Calu3 (cell line): ENCODE measurements at regions of chr14 and their contacts with region 1.

Region 1: GRCh38 chr14:23588884-23589598 is 10.5 kb upstream of the JPH4 start:
- DNase-seq: peak; percentile 91
- H3K4me3 Mint-ChIP-seq: no peak overlapping the region
- H3K27ac Mint-ChIP-seq: no peak overlapping the region
- H3K4me1 Mint-ChIP-seq: peaks cover 7% of the 10 kb centered on the region
- H3K27me3 Mint-ChIP-seq: peaks cover 14% of the 10 kb centered on the region
- CTCF ChIP-seq: peak; percentile 69

Region 2: DNA sequence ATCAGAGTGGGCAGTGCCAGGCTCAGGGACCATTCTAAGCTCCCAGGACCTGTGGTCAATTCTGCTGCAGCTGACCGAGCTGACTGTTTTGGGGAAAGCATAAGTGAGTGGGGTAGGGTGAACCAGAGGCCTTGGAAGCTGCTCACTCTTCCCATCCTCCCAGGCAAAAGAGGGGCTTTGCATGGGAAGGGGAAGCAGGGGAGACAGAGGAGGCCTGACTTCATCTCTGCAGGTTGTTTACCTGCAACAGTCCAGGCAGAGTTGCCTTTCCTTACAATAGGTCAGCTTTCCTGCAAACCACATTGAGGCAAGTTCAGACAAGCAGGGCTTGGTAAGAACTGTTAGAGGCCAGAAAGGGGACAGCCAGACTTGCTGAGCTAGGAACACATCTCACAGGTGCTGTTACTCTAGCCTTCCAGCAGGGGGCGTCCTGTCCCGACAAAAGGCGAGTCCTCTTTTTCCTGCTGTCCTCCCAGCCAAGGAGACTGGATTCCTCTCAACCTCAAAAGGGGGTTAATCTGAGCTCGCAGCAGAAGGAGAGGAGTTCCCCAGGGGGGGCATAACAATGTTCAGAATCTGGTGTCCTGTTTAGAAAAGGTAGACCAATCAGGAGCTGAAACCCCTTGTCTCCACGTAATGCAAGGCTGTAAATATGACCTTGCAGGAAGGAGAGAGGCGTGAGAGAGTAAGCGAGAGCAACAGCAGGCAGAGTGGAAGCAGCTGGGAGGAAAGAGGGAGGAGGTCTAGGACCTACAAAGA is 42.8 kb after region 1 on chr14:
- CTCF ChIA-PET with region 1: interaction called, 23 read pairs
- intact Hi-C with region 1: no loop called
- DNase-seq: peak; percentile 84
- H3K4me3 Mint-ChIP-seq: no peak overlapping the region
- H3K27ac Mint-ChIP-seq: no peak overlapping the region
- H3K4me1 Mint-ChIP-seq: peaks cover 7% of the 10 kb centered on the region
- H3K27me3 Mint-ChIP-seq: peaks cover 56% of the 10 kb centered on the region
- CTCF ChIP-seq: peak; percentile 86

Region 3: DNA sequence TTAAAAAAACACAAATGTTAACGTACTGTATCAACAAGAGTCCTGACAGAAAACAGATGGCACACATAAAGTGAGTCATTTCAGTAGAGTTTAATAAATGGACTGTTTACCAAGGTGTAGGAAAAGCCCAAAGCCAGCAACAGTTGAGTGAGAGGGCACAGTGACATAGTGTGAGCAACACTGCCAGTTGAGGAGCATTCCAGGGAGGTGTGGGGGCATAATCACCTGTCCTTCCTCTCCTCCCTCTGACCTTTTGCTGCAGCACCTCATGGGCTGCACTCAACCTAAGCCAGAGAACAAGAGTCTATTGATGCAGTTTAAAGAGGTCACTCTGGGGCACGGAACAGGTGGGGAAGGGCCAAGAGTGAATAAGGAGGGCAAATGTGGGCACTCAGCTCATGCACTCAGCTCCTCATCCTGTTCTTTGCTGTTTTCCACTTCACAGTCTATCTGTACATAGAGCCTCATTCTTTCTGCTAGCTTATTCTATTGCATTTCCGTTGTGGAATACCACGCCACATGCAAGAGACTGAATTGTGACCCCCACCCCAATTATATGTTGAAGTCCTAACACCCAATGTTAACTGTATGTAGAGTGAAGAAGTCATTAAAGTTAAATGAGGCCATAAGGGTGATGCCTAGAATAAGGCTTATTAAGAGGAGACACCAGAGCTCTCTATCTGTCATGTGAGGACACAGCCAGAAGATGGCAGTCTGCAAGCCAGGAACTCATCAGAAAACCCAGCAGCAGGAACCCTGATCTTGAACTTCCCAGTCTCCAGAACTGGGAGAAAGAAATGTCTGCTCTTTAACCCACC is 76.5 kb after region 1 on chr14:
- CTCF ChIA-PET with region 1: interaction called, 10 read pairs
- intact Hi-C with region 1: loop called (anchors 5 kb)
- DNase-seq: peak; percentile 48
- H3K4me3 Mint-ChIP-seq: no peak overlapping the region
- H3K27ac Mint-ChIP-seq: no peak overlapping the region
- H3K4me1 Mint-ChIP-seq: no peaks in the 10 kb centered on the region
- H3K27me3 Mint-ChIP-seq: peaks cover 74% of the 10 kb centered on the region
- CTCF ChIP-seq: no peak

Region 4: DNA sequence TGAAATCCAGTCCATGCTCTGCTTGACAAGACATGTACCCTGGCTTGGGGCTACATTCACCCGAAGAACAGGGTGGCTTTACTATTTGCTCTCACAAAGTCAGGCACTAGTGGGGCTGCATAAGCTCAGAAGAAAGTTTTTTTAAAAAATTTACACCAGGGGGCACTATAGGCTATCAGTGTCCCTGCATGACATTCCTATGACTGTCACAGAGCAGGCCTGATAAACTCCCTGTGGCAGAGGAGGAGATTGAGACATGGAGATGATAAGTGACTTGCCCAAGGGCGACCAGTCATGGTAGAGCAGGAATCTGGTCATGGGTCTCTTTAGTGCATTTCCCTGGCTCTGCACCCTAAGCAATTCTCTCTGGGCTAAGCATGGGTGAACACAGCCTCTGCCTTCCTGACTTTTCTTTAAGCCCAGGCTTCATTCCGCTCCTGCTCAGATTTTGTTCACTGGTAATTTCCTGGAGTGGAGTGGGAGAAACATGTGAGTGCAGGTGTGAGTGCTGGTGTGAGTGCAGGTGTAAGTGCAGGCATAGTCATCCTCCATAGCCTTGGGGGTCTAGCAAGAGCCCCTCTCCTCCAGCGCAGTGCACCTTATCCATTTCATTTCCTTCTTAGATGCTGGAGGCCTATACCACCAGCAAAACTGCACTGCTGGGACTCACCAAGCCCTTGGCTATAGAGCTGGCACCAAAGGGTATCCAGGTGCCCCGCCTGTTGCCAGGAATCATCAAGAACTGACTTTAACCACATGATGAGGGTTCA is 138.7 kb after region 1 on chr14:
- CTCF ChIA-PET with region 1: no interaction called
- intact Hi-C with region 1: loop called (anchors 5 kb)
- DNase-seq: peak; percentile 23
- H3K4me3 Mint-ChIP-seq: no peak overlapping the region
- H3K27ac Mint-ChIP-seq: no peak overlapping the region
- H3K4me1 Mint-ChIP-seq: peaks cover 7% of the 10 kb centered on the region
- H3K27me3 Mint-ChIP-seq: peaks cover 40% of the 10 kb centered on the region
- CTCF ChIP-seq: peak; percentile 25

Region 5: GRCh38 chr14:23910101-23910875 is 321.2 kb after region 1 on chr14:
- CTCF ChIA-PET with region 1: interaction called, 43 read pairs
- intact Hi-C with region 1: loop called (anchors 2 kb)
- DNase-seq: peak; percentile 74
- H3K4me3 Mint-ChIP-seq: no peak overlapping the region
- H3K27ac Mint-ChIP-seq: no peak overlapping the region
- H3K4me1 Mint-ChIP-seq: no peaks in the 10 kb centered on the region
- H3K27me3 Mint-ChIP-seq: peaks cover 67% of the 10 kb centered on the region
- CTCF ChIP-seq: peak; percentile 75

Region 6: GRCh38 chr14:23929822-23930294 is 340.8 kb after region 1 on chr14:
- CTCF ChIA-PET with region 1: interaction called, 8 read pairs
- intact Hi-C with region 1: loop called (anchors 5 kb)
- DNase-seq: peak; percentile 85
- H3K4me3 Mint-ChIP-seq: no peak overlapping the region
- H3K27ac Mint-ChIP-seq: no peak overlapping the region
- H3K4me1 Mint-ChIP-seq: no peaks in the 10 kb centered on the region
- H3K27me3 Mint-ChIP-seq: peaks cover 37% of the 10 kb centered on the region
- CTCF ChIP-seq: peak; percentile 89

Region 7: DNA sequence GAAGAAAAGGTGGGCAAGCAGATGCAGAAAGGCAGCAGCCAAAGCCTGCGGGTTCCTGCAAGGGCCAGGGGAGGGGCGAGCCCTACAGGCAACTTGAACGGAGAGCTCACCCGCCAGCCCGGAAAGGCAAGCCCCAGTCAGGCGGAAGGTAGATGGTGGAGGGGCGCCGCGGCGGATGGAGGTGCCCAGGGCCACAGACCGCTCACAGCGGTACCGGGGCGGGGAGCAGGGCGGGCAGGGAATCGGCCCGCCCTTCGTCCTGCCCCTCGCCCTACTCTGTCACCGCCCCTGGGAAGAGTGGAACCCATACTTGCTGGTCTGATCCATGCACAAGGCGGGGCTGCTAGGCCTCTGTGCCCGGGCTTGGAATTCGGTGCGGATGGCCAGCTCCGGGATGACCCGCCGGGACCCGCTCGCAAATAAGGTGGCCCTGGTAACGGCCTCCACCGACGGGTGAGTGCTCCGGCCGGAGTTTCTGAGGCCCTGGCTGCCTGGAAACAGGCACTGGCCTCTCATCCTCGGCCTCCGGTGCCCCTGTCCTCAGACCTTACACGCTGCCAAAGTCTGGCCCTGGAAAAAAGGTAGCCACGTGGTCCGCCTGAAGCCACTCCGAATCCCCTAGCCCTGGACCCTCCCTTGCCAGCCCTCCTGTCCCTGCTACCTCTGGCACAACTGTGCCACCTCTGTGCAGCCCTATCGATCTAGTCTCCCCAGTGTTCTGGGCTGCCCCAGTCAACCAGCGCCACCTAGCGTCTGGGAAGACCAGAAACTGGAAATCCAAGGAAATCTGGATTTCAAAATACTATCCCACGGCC is 364.6 kb after region 1 on chr14 and contains the start of gene DHRS4:
- CTCF ChIA-PET with region 1: no interaction called
- intact Hi-C with region 1: loop called (anchors 1 kb)
- DNase-seq: peak; percentile 84
- H3K4me3 Mint-ChIP-seq: peak within 1 kb of the TSS; percentile 91
- H3K27ac Mint-ChIP-seq: peak within 1 kb of the TSS; percentile 78
- H3K4me1 Mint-ChIP-seq: peaks cover 8% of the 10 kb centered on the region
- H3K27me3 Mint-ChIP-seq: no peaks in the 10 kb centered on the region
- CTCF ChIP-seq: peak; percentile 89
- total RNA-seq, gene DHRS4: 15.7 and 19.0 TPM in 2 replicates